ENCODE measurements at regions of chr1 and their contacts with region 1.

Region 1: DNA sequence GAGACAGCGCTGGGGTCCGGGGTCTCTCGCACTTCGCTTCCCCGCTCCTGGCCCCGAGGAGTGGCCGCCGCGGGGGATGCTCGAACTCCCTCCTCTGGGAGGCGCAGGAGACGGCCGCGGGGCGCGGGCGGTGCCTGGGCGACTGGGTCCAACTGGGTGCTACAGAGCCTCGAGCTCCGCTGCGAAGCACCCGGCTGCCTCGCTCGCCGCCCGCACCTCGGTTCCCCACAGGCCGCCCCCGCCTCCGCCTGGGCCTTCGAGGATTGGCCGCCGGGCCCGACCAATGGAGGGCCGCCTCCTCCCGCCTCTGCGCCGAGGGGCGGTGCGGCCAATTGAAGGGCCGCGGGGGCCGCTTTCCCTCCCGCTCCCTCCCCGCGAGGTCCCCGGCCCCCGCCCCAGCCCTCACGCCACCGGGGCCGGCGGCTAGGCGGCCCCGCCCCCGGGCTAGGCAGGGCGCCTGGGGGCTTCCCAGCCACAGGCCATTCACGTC is at the start of gene CNN3:
- DNase-seq: peak; percentile 91 to 94
- ATAC-seq: peak; percentile 93 to 97 (median 94)
- H3K4me3 ChIP-seq: peak within 1 kb of the TSS; percentile 61 to 96 (median 90)
- H3K27ac ChIP-seq: peak within 1 kb of the TSS; percentile 93 to 100 (median 98)
- H3K4me1 ChIP-seq: peaks cover 16 to 66% (median 56%) of the 10 kb centered on the region in 9 donors
- H3K27me3 ChIP-seq: peaks cover 0 to 50% (median 0%) of the 10 kb centered on the region in 7 donors
- CTCF ChIP-seq: no peak
- total RNA-seq, gene CNN3: 45.8 to 108 (median 67.2) TPM

Region 2: GRCh38 chr1:94854458-94855306 is 72.3 kb before region 1 on chr1:
- intact Hi-C with region 1: loop called in 8 of 10 experiments (anchors 2 to 10 kb)
- DNase-seq: peak; percentile 80 to 91
- ATAC-seq: peak; percentile 93 to 97 (median 95)
- H3K4me3 ChIP-seq: peak overlapping the region in 9 of 10 donors; percentile 18 to 56 (median 50)
- H3K27ac ChIP-seq: peak overlapping the region; percentile 14 to 81 (median 74)
- H3K4me1 ChIP-seq: peaks cover 0 to 45% (median 15%) of the 10 kb centered on the region in 9 donors
- H3K27me3 ChIP-seq: no peaks in the 10 kb centered on the region
- CTCF ChIP-seq: peak; percentile 81 to 98 (median 93)

Region 3: DNA sequence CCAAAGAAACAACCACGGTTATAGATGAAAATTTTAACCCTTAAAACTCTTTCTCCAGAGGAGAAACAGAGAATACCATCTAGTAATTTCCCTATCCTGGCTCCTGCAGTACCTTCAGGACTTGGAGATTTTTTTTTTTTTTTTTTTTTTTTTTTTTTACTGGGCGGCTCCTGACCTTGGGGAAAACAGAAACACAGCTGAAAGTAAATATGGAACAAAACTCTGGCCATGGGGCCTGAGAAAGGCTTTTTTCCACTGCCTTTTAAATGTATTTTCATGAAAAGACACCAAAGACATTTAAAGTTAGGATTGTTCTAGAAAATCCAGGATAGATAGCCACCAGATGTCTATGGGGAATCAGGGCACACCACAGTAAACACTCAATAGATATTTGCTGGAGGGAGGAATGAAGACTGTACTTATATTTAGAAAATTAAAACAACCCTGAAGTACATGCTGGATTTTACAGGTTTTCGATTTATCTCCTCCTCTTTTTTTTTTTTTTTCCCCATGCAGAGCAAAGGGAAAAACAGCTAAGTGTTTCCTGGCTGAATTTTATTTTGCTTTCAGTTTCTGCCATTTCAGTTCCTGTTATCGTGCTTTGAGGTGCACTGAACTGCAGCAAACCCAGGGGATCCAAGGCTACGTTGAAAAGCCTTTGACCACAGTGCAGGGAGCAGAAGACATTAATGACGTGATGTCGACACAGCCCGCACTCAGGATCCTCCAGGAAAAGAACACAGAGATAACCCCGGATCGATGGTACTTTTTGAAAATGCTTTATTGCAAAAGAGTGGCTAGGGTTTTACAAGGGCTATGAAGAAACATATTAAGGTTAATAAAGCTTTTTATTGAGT is 35.7 kb after region 1 on chr1:
- intact Hi-C with region 1: loop called in 2 of 10 experiments (anchors 2 to 5 kb)
- DNase-seq: peak in 1 of 2 donors; percentile 29
- ATAC-seq: peak; percentile 56 to 78 (median 73)
- H3K4me3 ChIP-seq: peak overlapping the region; percentile 7 to 55 (median 47)
- H3K27ac ChIP-seq: peak overlapping the region; percentile 46 to 88 (median 73)
- H3K4me1 ChIP-seq: peaks cover 2 to 25% (median 13%) of the 10 kb centered on the region in 9 donors
- H3K27me3 ChIP-seq: no peaks in the 10 kb centered on the region
- CTCF ChIP-seq: no peak

Region 4: DNA sequence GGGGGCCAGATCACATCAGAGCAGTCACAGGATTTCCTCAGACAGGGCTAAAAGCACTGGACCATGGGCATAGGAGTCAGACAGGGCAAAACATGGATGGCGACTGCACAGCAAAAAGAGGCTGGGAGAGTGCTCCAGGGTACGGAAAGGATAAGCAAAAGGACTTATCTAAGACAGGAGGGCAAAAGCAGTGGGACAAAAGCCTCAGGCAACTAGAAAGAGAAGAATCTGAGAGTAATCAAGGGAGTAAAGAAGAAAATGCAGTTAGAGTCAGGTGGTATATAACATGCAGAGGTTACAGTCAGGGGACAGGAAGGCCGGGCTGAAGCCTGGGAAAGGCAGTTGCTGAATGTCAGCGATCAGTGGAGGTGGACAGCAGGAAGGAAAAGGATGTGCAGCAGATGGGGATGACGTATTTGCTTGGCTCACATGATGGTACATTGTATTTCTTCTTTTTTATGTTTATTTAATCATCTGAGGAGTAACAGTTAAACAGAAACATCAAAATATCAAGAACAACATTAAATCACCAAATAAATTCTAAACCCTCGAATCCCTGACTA is 63.0 kb after region 1 on chr1:
- intact Hi-C with region 1: loop called in 1 of 10 experiments (anchors 5 kb)
- DNase-seq: peak in 1 of 2 donors; percentile 58
- ATAC-seq: peak in 7 of 8 donors; percentile 41 to 93 (median 76)
- H3K4me3 ChIP-seq: no peak overlapping the region
- H3K27ac ChIP-seq: peak overlapping the region in 6 of 10 donors; percentile 45 to 61 (median 55)
- H3K4me1 ChIP-seq: peaks cover 3 to 53% (median 30%) of the 10 kb centered on the region in 9 donors
- H3K27me3 ChIP-seq: no peaks in the 10 kb centered on the region
- CTCF ChIP-seq: no peak

Region 5: DNA sequence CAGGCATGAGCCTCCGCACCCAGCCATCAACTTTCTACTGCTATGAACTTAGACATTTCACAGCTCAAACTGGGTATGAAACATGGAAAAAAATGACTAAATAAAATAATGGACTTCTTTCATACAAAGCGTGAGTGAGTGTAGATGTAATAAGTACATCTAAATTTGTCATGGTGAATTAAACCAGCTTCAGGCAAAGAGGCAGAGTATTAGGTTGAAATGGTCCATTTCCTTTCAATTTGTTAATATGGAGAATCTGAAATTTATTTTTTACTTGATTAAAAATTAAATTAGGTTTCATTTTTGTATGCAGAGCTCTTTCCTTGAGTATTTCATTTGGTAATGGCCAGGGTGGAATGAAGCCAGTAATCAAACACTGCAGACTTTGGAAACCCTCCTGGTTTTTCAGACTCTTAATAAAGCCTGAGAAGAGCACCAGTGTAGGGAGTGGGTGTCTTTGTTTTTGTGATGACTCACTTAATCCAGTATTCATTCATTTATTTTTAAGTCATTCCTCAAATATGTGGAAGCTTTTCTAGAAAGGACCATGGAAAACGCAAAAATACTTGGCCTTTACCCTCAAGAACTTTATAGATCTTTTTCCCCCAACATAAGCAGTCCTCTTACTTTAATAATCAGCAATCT is 96.6 kb after region 1 on chr1:
- intact Hi-C with region 1: loop called in 3 of 10 experiments (anchors 5 to 10 kb)
- DNase-seq: peak in 1 of 2 donors; percentile 27
- ATAC-seq: peak in 7 of 8 donors; percentile 44 to 89 (median 73)
- H3K4me3 ChIP-seq: no peak overlapping the region
- H3K27ac ChIP-seq: peak overlapping the region in 7 of 10 donors; percentile 44 to 78 (median 50)
- H3K4me1 ChIP-seq: peaks cover 0 to 42% (median 33%) of the 10 kb centered on the region in 9 donors
- H3K27me3 ChIP-seq: no peaks in the 10 kb centered on the region
- CTCF ChIP-seq: no peak

Region 6: GRCh38 chr1:95043141-95043980 is 116.4 kb after region 1 on chr1:
- intact Hi-C with region 1: loop called in 9 of 10 experiments (anchors 2 to 10 kb)
- DNase-seq: peak; percentile 74 to 85
- ATAC-seq: peak; percentile 80 to 91 (median 86)
- H3K4me3 ChIP-seq: no peak overlapping the region
- H3K27ac ChIP-seq: peak overlapping the region in 9 of 10 donors; percentile 20 to 71 (median 63)
- H3K4me1 ChIP-seq: peaks cover 0 to 25% (median 17%) of the 10 kb centered on the region in 9 donors
- H3K27me3 ChIP-seq: no peaks in the 10 kb centered on the region
- CTCF ChIP-seq: peak; percentile 93 to 100 (median 98)

Region 7: GRCh38 chr1:95309031-95309471 is 382.1 kb after region 1 on chr1:
- intact Hi-C with region 1: no loop called
- DNase-seq: peak in 1 of 2 donors; percentile 20
- ATAC-seq: peak in 5 of 8 donors; percentile 55 to 81 (median 58)
- H3K4me3 ChIP-seq: no peak overlapping the region
- H3K27ac ChIP-seq: no peak overlapping the region
- H3K4me1 ChIP-seq: no peaks in the 10 kb centered on the region
- H3K27me3 ChIP-seq: peaks cover 0 to 28% (median 3%) of the 10 kb centered on the region in 7 donors
- CTCF ChIP-seq: peak; percentile 14 to 68 (median 52)

Region 8: DNA sequence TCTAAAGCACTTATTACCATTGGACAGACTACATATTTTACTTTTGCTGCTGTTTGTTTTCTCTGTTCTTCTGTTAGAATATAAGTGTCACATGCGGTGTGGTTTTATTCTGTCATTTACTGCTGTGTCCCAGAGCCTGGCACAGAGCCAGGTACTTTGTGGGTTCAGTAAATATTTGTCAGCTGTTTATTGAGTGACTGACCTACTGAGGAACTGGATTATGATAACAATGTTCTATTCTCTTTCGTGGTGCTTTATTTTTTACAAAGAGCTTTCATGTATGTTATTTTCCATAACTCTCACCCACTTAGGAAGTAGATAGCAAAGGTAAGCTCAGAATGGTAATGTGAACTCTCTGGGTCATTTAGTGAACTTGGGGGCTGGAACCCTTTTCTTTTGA is 425.8 kb after region 1 on chr1:
- intact Hi-C with region 1: no loop called
- DNase-seq: no peak
- ATAC-seq: peak in 2 of 8 donors; percentile 37 to 85
- H3K4me3 ChIP-seq: no peak overlapping the region
- H3K27ac ChIP-seq: no peak overlapping the region
- H3K4me1 ChIP-seq: peaks cover 0 to 8% (median 0%) of the 10 kb centered on the region in 9 donors
- H3K27me3 ChIP-seq: peaks cover 0 to 3% (median 0%) of the 10 kb centered on the region in 7 donors
- CTCF ChIP-seq: no peak